Dendritic cell treated with granulocyte-macrophage colony-stimulating factor and Interleukin-4, amounts not matched to agents 40 ng/mL and 50 ng/mL, for 4 days (primary cell): ENCODE measurements at regions of chr21 and their contacts with region 1.

Region 1: DNA sequence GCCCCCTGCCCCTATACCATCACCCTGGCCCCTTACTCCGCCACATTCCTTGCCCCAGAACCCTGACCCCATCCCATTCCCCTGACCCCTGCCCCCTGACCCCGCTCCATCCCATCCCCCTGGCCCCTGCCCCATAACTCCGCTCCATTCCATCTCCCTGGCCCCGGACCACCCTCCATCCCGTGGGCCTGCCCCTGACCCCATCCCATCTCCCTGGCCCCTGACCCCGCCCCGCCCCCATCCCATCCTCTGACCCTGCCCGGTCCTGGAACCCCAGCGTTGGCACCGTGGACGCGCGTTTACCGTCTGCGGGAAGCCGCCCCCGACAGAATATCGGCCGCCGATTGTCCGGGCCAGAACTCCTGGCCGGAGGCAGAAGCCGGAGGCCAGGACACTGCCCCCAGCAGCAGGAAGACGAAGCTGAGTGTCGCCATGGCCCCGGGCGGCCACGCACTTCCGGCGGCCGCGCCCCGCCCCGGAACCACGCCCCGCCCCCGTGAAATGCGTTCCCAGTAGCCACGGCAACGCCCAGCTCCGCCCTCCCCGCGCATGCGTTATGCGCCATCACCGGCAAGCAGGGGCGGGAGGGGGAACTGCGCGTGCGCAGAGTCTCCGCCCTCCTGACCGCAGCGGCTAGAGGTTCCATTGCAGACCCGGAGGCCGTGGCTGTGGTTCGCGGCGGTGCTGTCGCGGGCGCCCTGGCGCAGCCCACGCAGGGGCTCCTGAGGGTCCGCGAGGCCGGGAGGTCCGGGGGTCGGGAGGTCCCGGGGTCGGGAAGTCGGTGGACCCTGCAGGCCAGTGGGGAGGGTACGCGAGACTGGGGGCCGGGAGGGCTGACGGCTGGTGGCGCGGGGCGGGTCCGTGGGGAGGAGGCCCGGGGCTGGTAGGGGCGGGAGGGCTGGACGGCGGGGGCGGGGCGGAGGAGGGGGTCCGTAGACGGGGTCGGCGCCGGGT is at the start of gene POFUT2:
- H3K4me3 Mint-ChIP-seq: peak within 1 kb of the TSS; percentile 85
- H3K27ac Mint-ChIP-seq: peak within 1 kb of the TSS; percentile 87
- H3K4me1 Mint-ChIP-seq: peaks cover 32% of the 10 kb centered on the region
- H3K27me3 Mint-ChIP-seq: peaks cover under 1% of the 10 kb centered on the region

Region 2: DNA sequence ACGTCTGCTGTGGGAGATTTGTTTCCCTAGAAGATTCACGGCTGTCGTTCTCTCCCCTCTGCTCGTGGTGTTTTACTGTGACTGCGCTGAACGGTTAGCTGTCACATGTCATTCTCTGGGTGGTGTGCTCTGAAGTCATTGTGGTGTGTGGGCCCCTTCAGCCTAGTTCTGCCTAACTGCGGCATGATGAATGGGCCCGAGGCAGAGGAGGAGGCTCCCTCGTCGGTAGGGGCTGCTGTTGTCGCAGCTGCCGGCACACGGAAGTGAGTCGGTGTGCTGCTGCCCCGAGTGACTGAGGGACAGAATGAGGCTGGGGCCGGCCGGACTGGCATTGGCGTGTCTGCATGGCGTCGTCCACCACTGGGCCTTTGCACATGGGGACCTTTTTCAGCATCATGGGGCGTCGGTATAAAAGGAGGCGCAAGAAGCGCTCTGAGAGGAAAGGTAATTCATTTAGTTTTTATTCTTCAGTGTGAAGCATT is 135.4 kb before region 1 on chr21:
- intact Hi-C with region 1: loop called (anchors 1 kb)
- H3K4me3 Mint-ChIP-seq: peak overlapping the region; percentile 74
- H3K27ac Mint-ChIP-seq: peak overlapping the region; percentile 83
- H3K4me1 Mint-ChIP-seq: peaks cover 25% of the 10 kb centered on the region
- H3K27me3 Mint-ChIP-seq: peaks cover 6% of the 10 kb centered on the region

Region 3: GRCh38 chr21:45309069-45309986 is 21.6 kb after region 1 on chr21:
- intact Hi-C with region 1: loop called (anchors 2 kb)
- H3K4me3 Mint-ChIP-seq: peak overlapping the region; percentile 0
- H3K27ac Mint-ChIP-seq: no peak overlapping the region
- H3K4me1 Mint-ChIP-seq: peaks cover 11% of the 10 kb centered on the region
- H3K27me3 Mint-ChIP-seq: peaks cover 16% of the 10 kb centered on the region

Region 4: GRCh38 chr21:45319461-45320211 is 31.9 kb after region 1 on chr21:
- intact Hi-C with region 1: no loop called
- H3K4me3 Mint-ChIP-seq: no peak overlapping the region
- H3K27ac Mint-ChIP-seq: no peak overlapping the region
- H3K4me1 Mint-ChIP-seq: no peaks in the 10 kb centered on the region
- H3K27me3 Mint-ChIP-seq: peaks cover 10% of the 10 kb centered on the region

Region 5: GRCh38 chr21:45439161-45439872 is 151.6 kb after region 1 on chr21:
- intact Hi-C with region 1: loop called (anchors 1 kb)
- H3K4me3 Mint-ChIP-seq: peak overlapping the region; percentile 61
- H3K27ac Mint-ChIP-seq: peak overlapping the region; percentile 55
- H3K4me1 Mint-ChIP-seq: no peaks in the 10 kb centered on the region
- H3K27me3 Mint-ChIP-seq: peaks cover 27% of the 10 kb centered on the region

Region 6: GRCh38 chr21:45820171-45821091 is 532.7 kb after region 1 on chr21:
- intact Hi-C with region 1: loop called (anchors 2 kb)
- H3K4me3 Mint-ChIP-seq: no peak overlapping the region
- H3K27ac Mint-ChIP-seq: no peak overlapping the region
- H3K4me1 Mint-ChIP-seq: peaks cover 19% of the 10 kb centered on the region
- H3K27me3 Mint-ChIP-seq: no peaks in the 10 kb centered on the region